ENCODE measurements at regions of chr18 and their contacts with region 1.

Region 1: GRCh38 chr18:12934454-12935071 is 13.2 kb upstream of the SEH1L start:
- DNase-seq: peak; percentile 86
- H3K4me3 Mint-ChIP-seq: no peak overlapping the region
- H3K27ac Mint-ChIP-seq: no peak overlapping the region
- H3K4me1 Mint-ChIP-seq: peaks cover 6% of the 10 kb centered on the region
- H3K27me3 Mint-ChIP-seq: no peaks in the 10 kb centered on the region
- CTCF ChIP-seq: peak; percentile 93

Region 2: GRCh38 chr18:12474876-12475275 is 459.7 kb before region 1 on chr18:
- CTCF ChIA-PET with region 1: no interaction called
- POLR2A ChIA-PET with region 1: no interaction called
- intact Hi-C with region 1: no loop called
- DNase-seq: no peak
- H3K4me3 Mint-ChIP-seq: no peak overlapping the region
- H3K27ac Mint-ChIP-seq: no peak overlapping the region
- H3K4me1 Mint-ChIP-seq: peaks cover 8% of the 10 kb centered on the region
- H3K27me3 Mint-ChIP-seq: no peaks in the 10 kb centered on the region
- CTCF ChIP-seq: no peak

Region 3: DNA sequence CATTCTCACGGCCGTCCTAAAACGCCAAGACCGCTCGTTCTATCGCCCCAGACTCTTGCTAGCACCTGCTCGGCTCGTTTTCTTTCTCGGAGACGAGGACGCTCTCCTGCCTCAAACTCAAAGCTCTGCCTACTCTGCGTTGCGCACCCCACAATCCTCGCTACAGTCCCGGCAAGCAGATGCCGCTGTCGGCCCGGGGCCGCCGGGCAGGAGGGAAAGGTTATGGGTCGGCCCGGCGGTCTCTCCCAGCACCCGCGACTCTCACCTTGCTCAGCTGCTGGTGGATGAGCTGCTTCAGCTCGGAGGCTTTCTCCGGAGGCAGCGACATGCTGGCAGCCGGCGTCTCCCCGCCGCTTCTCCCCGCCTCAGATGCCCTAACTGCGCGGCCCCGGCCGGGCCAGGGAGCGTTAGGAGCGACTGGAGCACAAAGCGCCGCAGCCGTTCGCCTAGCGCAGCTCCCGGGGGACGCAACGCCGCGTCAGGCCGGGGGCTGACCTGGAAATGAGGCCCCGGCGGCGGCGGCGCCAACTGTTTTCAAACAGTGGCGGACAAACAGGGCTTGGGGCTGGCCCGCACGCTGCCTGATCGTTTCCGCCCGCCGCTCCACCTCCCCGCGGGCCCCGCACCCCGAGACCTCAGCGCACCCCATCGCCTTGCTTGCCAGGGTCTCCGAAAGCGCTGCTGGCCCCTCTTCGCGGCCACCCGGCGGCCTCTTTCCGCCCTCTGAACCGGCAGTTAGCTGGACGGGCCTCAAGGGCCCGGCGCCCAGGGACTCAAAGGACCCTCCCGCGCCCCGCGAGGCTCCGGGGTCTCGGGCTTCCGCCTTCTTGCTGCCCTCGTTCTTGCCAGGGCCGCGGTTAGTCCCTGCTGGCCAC is 232.1 kb before region 1 on chr18 and contains the starts of genes CEP76 and PSMG2:
- CTCF ChIA-PET with region 1: interaction called, 10 read pairs
- POLR2A ChIA-PET with region 1: no interaction called
- intact Hi-C with region 1: no loop called
- DNase-seq: peak; percentile 90
- H3K4me3 Mint-ChIP-seq: peak within 1 kb of the TSS; percentile 100
- H3K27ac Mint-ChIP-seq: peak within 1 kb of the TSS; percentile 100
- H3K4me1 Mint-ChIP-seq: peaks cover 45% of the 10 kb centered on the region
- H3K27me3 Mint-ChIP-seq: no peaks in the 10 kb centered on the region
- CTCF ChIP-seq: no peak
- total RNA-seq, gene CEP76: 4.9 and 6.4 TPM in 2 replicates
- total RNA-seq, gene PSMG2: 88.6 and 100 TPM in 2 replicates

Region 4: GRCh38 chr18:12726774-12727550 is 207.6 kb before region 1 on chr18:
- CTCF ChIA-PET with region 1: interaction called, 162 read pairs
- POLR2A ChIA-PET with region 1: interaction called, 10 read pairs
- intact Hi-C with region 1: loop called (anchors 1 kb)
- DNase-seq: peak; percentile 67
- H3K4me3 Mint-ChIP-seq: no peak overlapping the region
- H3K27ac Mint-ChIP-seq: no peak overlapping the region
- H3K4me1 Mint-ChIP-seq: peaks cover 7% of the 10 kb centered on the region
- H3K27me3 Mint-ChIP-seq: no peaks in the 10 kb centered on the region
- CTCF ChIP-seq: peak; percentile 87

Region 5: GRCh38 chr18:12750076-12750714 is 184.4 kb before region 1 on chr18:
- CTCF ChIA-PET with region 1: interaction called, 85 read pairs
- POLR2A ChIA-PET with region 1: interaction called, 3 read pairs
- intact Hi-C with region 1: no loop called
- DNase-seq: no peak
- H3K4me3 Mint-ChIP-seq: no peak overlapping the region
- H3K27ac Mint-ChIP-seq: no peak overlapping the region
- H3K4me1 Mint-ChIP-seq: no peaks in the 10 kb centered on the region
- H3K27me3 Mint-ChIP-seq: no peaks in the 10 kb centered on the region
- CTCF ChIP-seq: no peak

Region 6: GRCh38 chr18:12872408-12872807 is 62.2 kb before region 1 on chr18:
- CTCF ChIA-PET with region 1: no interaction called
- POLR2A ChIA-PET with region 1: no interaction called
- intact Hi-C with region 1: no loop called
- DNase-seq: no peak
- H3K4me3 Mint-ChIP-seq: no peak overlapping the region
- H3K27ac Mint-ChIP-seq: no peak overlapping the region
- H3K4me1 Mint-ChIP-seq: peaks cover 6% of the 10 kb centered on the region
- H3K27me3 Mint-ChIP-seq: no peaks in the 10 kb centered on the region
- CTCF ChIP-seq: no peak

Region 7: GRCh38 chr18:12904012-12904516 is 30.5 kb before region 1 on chr18:
- CTCF ChIA-PET with region 1: interaction called, 19 read pairs
- POLR2A ChIA-PET with region 1: interaction called, 3 read pairs
- intact Hi-C with region 1: no loop called
- DNase-seq: no peak
- H3K4me3 Mint-ChIP-seq: no peak overlapping the region
- H3K27ac Mint-ChIP-seq: no peak overlapping the region
- H3K4me1 Mint-ChIP-seq: no peaks in the 10 kb centered on the region
- H3K27me3 Mint-ChIP-seq: peaks cover 10% of the 10 kb centered on the region
- CTCF ChIP-seq: no peak